ENCODE measurements at regions of chr4 and their contacts with region 1.

Region 1: DNA sequence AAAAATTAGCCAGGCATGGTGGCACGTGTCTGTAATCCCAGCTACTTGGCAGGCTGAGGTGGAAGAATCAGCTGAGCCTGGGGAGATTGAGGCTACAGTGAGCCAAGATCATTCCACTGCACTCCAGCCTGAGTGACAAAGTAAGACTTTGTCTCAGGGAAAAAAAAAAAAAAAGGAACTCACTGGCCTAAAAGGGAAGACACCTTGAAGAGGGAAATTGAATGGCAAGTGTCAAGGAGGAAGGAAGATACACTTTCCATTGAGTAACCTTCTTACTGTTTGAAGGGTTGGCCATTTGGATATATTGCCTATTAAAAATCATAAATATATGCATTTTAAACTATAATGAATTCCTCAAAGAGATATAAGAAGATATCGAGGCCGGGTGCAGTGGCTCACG is 147.5 kb upstream of the FAM241A start:
- DNase-seq: no peak
- H3K4me3 ChIP-seq: no peak overlapping the region
- H3K27ac ChIP-seq: no peak overlapping the region
- H3K4me1 ChIP-seq: 0 out of 7 replicates have a peak, but pooled peaks cover 0 to 2% (median 0%) of the 10 kb centered on the region in 4 experiments
- H3K27me3 ChIP-seq: no peaks in the 10 kb centered on the region
- CTCF ChIP-seq: no peak
- EP300 ChIP-seq: no peak
- POLR2A ChIP-seq: no peak
- RAD21 ChIP-seq: no peak

Region 2: DNA sequence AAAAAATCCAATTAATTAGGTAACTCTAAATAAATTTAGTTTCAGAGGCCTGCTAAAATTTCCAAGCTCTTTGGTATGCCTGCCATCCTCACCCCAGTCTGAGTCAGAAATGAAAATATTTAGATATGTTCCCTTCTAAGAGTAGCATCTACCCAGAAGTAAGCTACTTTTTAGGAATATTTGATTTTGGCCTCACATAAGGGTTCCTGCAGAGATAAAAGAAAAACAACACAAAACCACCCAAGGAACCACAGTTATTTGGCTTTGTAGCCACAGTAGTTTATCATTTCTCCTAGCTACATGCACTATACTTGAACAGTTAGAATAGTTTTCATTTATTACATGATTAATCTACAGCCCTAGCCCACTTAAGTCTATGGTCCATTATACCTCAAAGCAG is 45.1 kb before region 1 on chr4:
- CTCF ChIA-PET with region 1: no interaction called
- POLR2A ChIA-PET with region 1: no interaction called
- DNase-seq: no peak
- H3K4me3 ChIP-seq: no peak overlapping the region
- H3K27ac ChIP-seq: no peak overlapping the region
- H3K4me1 ChIP-seq: no peaks in the 10 kb centered on the region
- H3K27me3 ChIP-seq: no peaks in the 10 kb centered on the region
- CTCF ChIP-seq: no peak
- EP300 ChIP-seq: no peak
- POLR2A ChIP-seq: no peak
- RAD21 ChIP-seq: no peak

Region 3: GRCh38 chr4:111984169-111984819 is 13.5 kb before region 1 on chr4:
- CTCF ChIA-PET with region 1: interaction called, 16 read pairs
- POLR2A ChIA-PET with region 1: interaction called, 3 read pairs
- DNase-seq: peak in 1 of 2 experiments; percentile 48
- H3K4me3 ChIP-seq: no peak overlapping the region
- H3K27ac ChIP-seq: no peak overlapping the region
- H3K4me1 ChIP-seq: peaks cover 0 to 7% (median 4%) of the 10 kb centered on the region in 4 experiments; a peak in 4 of 7 replicates
- H3K27me3 ChIP-seq: no peaks in the 10 kb centered on the region
- CTCF ChIP-seq: peak in 2 of 3 experiments; percentile 26 to 55; a peak in 3 of 4 replicates
- EP300 ChIP-seq: no peak
- POLR2A ChIP-seq: no peak
- RAD21 ChIP-seq: 0 out of 4 replicates have a peak, but pooled peaks of 1 of the 2 experiments have one; percentile 16

Region 4: GRCh38 chr4:112153211-112153791 is 155.5 kb after region 1 on chr4:
- CTCF ChIA-PET with region 1: no interaction called
- POLR2A ChIA-PET with region 1: no interaction called
- DNase-seq: no peak
- H3K4me3 ChIP-seq: no peak overlapping the region
- H3K27ac ChIP-seq: no peak overlapping the region
- H3K4me1 ChIP-seq: no peaks in the 10 kb centered on the region
- H3K27me3 ChIP-seq: no peaks in the 10 kb centered on the region
- CTCF ChIP-seq: no peak
- EP300 ChIP-seq: no peak
- POLR2A ChIP-seq: no peak
- RAD21 ChIP-seq: no peak

Region 5: GRCh38 chr4:112170451-112170993 is 172.7 kb after region 1 on chr4:
- CTCF ChIA-PET with region 1: no interaction called
- POLR2A ChIA-PET with region 1: no interaction called
- DNase-seq: no peak
- H3K4me3 ChIP-seq: no peak overlapping the region
- H3K27ac ChIP-seq: no peak overlapping the region
- H3K4me1 ChIP-seq: no peaks in the 10 kb centered on the region
- H3K27me3 ChIP-seq: no peaks in the 10 kb centered on the region
- CTCF ChIP-seq: no peak
- EP300 ChIP-seq: no peak
- POLR2A ChIP-seq: no peak
- RAD21 ChIP-seq: no peak

Region 6: GRCh38 chr4:112312610-112313239 is 314.9 kb after region 1 on chr4:
- CTCF ChIA-PET with region 1: no interaction called
- POLR2A ChIA-PET with region 1: no interaction called
- DNase-seq: no peak
- H3K4me3 ChIP-seq: no peak overlapping the region
- H3K27ac ChIP-seq: no peak overlapping the region
- H3K4me1 ChIP-seq: peaks cover 0 to 9% (median 2%) of the 10 kb centered on the region in 4 experiments; a peak in 4 of 7 replicates
- H3K27me3 ChIP-seq: no peaks in the 10 kb centered on the region
- CTCF ChIP-seq: no peak
- EP300 ChIP-seq: no peak
- POLR2A ChIP-seq: no peak
- RAD21 ChIP-seq: no peak

Measured in H1 (cell line).